Body of pancreas (tissue), 4 donors: ENCODE measurements at regions of chr15 and their contacts with region 1.

Region 1: DNA sequence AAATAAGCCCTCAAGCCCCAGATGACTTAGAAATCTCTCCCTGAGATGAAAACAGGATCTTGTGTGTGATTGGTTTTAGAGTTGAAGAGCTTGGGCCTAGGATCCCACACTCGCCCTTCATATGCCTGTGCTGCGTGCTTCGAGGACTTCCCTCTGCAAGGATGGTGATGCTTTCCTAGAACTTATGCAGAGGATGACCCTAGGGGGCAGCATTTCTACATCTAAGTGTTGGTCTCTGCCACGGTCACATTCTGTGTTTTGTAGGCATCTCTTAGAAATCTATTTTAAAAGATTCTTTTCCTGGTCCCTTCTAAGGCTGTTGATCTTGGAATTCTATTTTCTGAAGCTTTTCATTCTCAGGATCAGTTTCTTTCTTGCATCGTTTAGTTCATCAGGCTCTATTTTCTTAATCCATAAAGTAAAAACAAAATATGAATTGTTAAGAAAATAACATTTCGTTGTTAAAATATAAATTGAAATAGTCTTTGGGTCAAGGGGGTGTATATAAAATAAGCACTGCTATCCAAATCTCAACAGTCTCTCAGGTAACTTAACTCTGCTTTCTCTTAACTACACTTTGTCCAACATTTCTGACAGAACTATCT is 45.7 kb downstream of the WDR76 start:
- DNase-seq: peak; percentile 47 to 72 (median 58)
- ATAC-seq: peak; percentile 45
- H3K4me3 ChIP-seq: no peak overlapping the region
- H3K27ac ChIP-seq: no peak overlapping the region
- H3K4me1 ChIP-seq: no peaks in the 10 kb centered on the region
- H3K27me3 ChIP-seq: no peaks in the 10 kb centered on the region
- CTCF ChIP-seq: peak; percentile 7 to 64 (median 44)
- POLR2A ChIP-seq: no peak

Region 2: DNA sequence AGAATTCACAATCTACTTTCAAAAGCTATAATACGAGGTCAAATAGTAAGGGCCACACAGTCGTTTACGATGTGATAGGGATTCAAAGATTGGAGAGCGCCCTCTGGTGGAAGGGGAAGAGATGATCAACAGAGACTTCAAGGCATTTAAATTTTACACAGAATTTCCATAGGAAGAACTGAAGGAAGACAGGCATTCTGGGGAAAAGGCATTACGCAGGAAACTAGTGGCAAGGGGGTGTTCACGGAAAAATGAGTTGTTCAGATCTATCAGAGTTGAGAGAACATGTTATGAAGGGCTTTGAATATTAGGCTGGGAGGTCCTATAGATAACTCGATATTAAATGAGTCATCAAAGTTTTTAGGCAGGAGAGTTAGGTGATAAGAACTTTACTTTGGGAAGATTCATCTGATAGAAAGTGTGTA is 193.8 kb after region 1 on chr15:
- intact Hi-C with region 1: loop called (anchors 10 kb)
- DNase-seq: peak; percentile 66 to 73 (median 69)
- ATAC-seq: peak; percentile 60
- H3K4me3 ChIP-seq: no peak overlapping the region
- H3K27ac ChIP-seq: no peak overlapping the region
- H3K4me1 ChIP-seq: no peaks in the 10 kb centered on the region
- H3K27me3 ChIP-seq: no peaks in the 10 kb centered on the region
- CTCF ChIP-seq: peak; percentile 54 to 78 (median 71)
- POLR2A ChIP-seq: no peak